ENCODE measurements at regions of chr3 and their contacts with region 1.

Region 1: DNA sequence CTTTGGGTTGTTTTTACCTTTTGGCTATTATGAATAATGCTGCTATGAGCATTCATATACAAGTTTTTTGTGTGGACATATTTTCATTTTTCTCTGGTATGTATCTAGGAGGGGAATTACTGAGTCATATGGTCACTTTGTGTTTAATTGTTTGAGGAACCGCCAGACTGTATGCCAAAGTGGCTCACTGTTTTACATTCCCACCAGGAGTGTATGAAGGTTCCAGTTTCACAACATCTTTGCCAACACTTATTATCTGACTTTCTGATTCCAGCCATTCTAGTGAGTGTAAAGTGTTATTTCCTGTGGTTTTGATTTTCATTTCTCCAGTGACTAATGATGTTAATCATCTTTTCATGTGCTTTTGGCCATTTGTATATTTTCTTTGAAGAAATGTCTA is 51.8 kb downstream of the CMTM7 start:
- DNase-seq: peak; percentile 96
- H3K4me3 ChIP-seq: no peak overlapping the region
- H3K27ac ChIP-seq: peak overlapping the region; percentile 60
- H3K4me1 ChIP-seq: peaks cover 22% of the 10 kb centered on the region
- H3K27me3 ChIP-seq: no peaks in the 10 kb centered on the region
- CTCF ChIP-seq: no peak
- POLR2A ChIP-seq: no peak

Region 2: DNA sequence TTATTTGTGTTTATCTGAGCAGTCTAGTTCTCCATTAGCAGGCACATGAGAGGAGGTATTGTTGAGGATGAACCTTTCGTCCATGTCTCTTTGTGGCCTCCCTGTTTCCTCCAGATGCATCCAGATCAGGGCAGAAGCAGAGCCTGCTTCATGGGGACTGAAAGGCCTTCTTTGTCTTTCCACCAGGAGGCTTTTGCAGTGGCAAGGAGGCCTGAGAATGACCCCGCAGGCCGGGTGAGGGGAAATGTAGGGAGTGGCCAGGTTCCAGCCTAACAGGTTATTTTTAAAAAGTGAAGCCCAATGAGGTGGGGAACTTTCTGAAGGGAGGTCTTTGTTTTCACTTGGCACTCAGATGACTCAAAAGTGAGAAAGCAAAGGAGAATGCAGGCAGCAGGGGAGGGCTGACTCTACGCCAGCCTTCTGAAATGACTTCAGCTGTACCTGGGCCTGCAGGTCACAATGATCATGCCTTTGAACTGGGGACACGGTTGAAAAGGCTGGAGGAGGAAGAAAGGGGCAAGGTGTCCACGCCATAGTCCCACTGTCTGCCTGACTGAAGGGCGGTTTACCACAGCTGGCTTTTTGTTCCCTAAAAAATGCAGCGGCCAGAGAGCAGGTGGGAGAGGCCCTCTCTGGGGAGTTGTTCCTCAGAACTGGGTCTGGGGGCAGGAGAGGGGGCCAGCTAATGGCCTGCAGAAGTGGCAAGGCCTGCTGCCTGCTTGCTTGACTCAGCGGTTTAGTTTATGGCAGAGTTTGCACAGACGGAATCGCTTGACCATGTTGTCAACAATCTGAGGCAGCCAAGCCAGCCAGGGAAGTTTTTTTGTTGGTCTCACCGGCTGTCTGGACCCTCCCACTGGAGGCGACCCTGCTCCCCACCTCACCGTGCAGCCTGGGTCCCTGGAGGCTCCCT is 23.1 kb before region 1 on chr3:
- CTCF ChIA-PET with region 1: interaction called, 4 read pairs
- POLR2A ChIA-PET with region 1: no interaction called
- dilution Hi-C with region 1: no loop called
- intact Hi-C with region 1: loop called (anchors 1 kb)
- DNase-seq: peak; percentile 85
- H3K4me3 ChIP-seq: no peak overlapping the region
- H3K27ac ChIP-seq: peak overlapping the region; percentile 92
- H3K4me1 ChIP-seq: peaks cover 57% of the 10 kb centered on the region
- H3K27me3 ChIP-seq: no peaks in the 10 kb centered on the region
- CTCF ChIP-seq: peak; percentile 22 to 25
- POLR2A ChIP-seq: peak; percentile 11